ENCODE measurements at regions of chr2 and their contacts with region 1.

Region 1: DNA sequence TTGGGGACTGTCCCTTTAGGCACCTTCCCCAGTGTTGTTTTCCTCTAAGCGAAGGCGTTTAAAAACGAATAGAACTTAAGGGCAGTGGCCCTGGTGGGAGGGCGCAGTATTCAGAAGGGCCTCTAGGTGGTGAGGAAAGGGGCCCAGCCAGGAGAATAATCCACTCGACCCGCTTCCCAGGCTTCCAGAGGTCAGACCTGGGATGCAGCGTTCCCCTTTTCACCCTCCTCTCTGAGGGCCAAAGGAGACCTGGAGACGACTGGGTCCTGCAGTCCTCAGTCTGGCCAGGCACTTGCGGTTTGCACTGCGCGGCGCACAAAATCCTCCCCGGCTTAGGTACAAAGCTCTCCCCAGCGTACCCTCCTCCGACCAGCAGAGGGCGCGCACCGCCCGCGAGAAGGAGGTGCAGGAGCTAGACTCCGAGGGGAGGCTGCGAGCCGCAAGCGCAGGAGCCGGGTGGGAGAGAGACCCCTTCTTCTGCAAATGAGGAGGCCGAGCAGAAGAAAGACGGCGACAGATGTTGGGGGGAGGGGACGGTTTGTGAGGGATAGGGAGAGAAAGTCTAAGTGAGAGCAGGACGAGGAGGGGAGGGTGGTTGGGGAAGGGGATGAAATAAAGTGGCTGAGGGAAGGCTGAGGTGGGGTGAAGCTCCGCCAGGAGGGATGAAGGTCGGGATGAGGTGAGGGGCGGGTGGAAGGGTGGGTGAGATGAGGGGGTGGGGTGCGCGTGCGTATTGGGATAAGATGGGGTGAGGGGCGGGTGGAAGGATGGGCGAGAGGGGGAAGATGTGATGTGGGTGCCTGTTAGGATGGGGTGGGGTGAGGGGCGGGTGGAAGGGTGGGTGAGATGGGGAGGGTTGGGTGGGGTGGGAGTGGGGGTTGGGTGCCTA is 4.9 kb downstream of the FEV start:
- DNase-seq: peak; percentile 81
- H3K4me3 ChIP-seq: no peak overlapping the region
- H3K27ac ChIP-seq: no peak overlapping the region
- H3K4me1 ChIP-seq: peaks cover 15% of the 10 kb centered on the region
- H3K27me3 ChIP-seq: peaks cover 41 to 53% of the 10 kb centered on the region in 2 experiments
- CTCF ChIP-seq: peak; percentile 91 to 98
- POLR2A ChIP-seq: no peak

Region 2: DNA sequence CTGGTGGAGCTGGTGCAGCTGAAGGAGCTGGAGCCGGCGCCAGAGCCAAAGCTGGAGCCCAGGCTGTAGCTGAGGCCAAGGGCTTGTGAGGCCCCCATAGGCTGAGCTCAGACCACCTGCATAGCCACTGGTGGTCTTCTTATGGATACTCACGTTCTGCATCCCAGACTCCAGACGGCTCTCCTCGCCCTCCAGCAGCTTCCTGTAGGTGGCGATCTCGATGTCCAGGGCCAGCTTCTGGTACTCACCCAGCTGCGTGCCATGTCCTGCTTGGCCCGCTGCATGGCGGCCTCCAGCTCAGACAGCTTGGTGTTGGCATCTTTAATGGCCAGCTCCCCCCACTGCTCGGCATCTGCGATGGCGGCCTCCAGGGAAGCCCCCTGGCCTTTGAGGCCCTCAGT is 26.6 kb before region 1 on chr2:
- CTCF ChIA-PET with region 1: interaction called, 12 read pairs
- POLR2A ChIA-PET with region 1: no interaction called
- dilution Hi-C with region 1: no loop called
- intact Hi-C with region 1: no loop called
- DNase-seq: no peak
- H3K4me3 ChIP-seq: no peak overlapping the region
- H3K27ac ChIP-seq: no peak overlapping the region
- H3K4me1 ChIP-seq: no peaks in the 10 kb centered on the region
- H3K27me3 ChIP-seq: peaks cover 23 to 27% of the 10 kb centered on the region in 2 experiments
- CTCF ChIP-seq: peak in 1 of 2 donors; percentile 13
- POLR2A ChIP-seq: no peak

Region 3: DNA sequence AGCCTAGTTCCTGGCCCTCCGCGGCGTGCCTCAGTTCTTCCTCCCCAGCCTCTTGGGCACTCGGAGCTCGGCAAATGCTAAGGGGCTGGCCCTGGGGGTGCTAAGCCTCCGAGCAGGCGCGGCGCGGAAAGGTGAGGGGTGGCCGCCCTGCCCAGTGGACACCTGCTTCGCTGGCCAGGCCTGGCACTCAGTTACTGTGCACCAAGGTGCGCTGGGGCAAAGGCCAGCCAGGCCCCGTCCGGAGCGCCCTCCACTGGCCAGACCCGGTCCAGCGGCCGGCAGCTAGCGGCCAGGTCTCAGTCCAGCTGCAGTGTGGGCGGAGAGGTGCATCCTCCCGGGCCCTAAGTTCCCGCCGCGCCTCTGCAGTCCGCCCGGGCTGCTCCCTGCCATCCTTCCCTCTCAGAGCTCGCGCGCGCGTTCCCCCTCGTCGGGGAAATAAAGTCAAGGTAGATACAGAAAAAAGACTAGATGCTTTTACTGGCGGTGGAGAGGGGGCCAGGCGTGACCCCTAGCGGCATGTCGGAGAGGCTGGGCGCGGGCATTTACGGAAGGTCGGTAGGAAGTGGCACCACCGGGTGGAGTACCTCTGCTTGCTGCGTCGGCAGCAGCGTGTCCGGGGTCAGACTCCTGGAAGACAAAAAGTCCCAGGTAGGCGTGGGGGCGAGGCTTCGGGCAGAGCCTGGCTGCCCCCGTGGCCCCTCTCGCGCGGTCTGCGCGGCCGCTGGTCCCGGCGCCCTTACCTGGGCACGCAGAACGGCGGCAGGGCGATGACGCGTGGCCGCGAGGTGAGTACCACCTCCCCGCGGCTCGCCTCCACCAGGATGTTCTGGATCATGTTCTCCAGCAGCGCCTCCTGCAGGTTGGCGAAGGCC is 22.5 kb after region 1 on chr2:
- CTCF ChIA-PET with region 1: interaction called, 164 read pairs
- POLR2A ChIA-PET with region 1: no interaction called
- dilution Hi-C with region 1: no loop called
- intact Hi-C with region 1: loop called (anchors 1 kb)
- DNase-seq: no peak
- H3K4me3 ChIP-seq: no peak overlapping the region
- H3K27ac ChIP-seq: no peak overlapping the region
- H3K4me1 ChIP-seq: no peaks in the 10 kb centered on the region
- H3K27me3 ChIP-seq: peaks cover 56% of the 10 kb centered on the region in 2 experiments
- CTCF ChIP-seq: peak; percentile 48 to 63
- POLR2A ChIP-seq: no peak

Region 4: GRCh38 chr2:219029829-219030165 is 49.7 kb after region 1 on chr2:
- CTCF ChIA-PET with region 1: interaction called, 64 read pairs
- POLR2A ChIA-PET with region 1: no interaction called
- dilution Hi-C with region 1: no loop called
- intact Hi-C with region 1: loop called (anchors 2 kb)
- DNase-seq: peak; percentile 64
- H3K4me3 ChIP-seq: no peak overlapping the region
- H3K27ac ChIP-seq: no peak overlapping the region
- H3K4me1 ChIP-seq: no peaks in the 10 kb centered on the region
- H3K27me3 ChIP-seq: peaks cover 13 to 14% of the 10 kb centered on the region in 2 experiments
- CTCF ChIP-seq: peak; percentile 85 to 97
- POLR2A ChIP-seq: no peak

Region 5: GRCh38 chr2:219073413-219074129 is 93.5 kb after region 1 on chr2:
- CTCF ChIA-PET with region 1: interaction called, 15 read pairs
- POLR2A ChIA-PET with region 1: no interaction called
- dilution Hi-C with region 1: no loop called
- intact Hi-C with region 1: no loop called
- DNase-seq: peak; percentile 23
- H3K4me3 ChIP-seq: no peak overlapping the region
- H3K27ac ChIP-seq: no peak overlapping the region
- H3K4me1 ChIP-seq: no peaks in the 10 kb centered on the region
- H3K27me3 ChIP-seq: no peaks in the 10 kb centered on the region
- CTCF ChIP-seq: peak; percentile 60 to 65
- POLR2A ChIP-seq: no peak

Region 6: GRCh38 chr2:219155054-219155644 is 175.1 kb after region 1 on chr2:
- CTCF ChIA-PET with region 1: interaction called, 83 read pairs
- POLR2A ChIA-PET with region 1: no interaction called
- dilution Hi-C with region 1: no loop called
- intact Hi-C with region 1: loop called (anchors 1 kb)
- DNase-seq: peak; percentile 61
- H3K4me3 ChIP-seq: no peak overlapping the region
- H3K27ac ChIP-seq: no peak overlapping the region
- H3K4me1 ChIP-seq: peaks cover 6% of the 10 kb centered on the region
- H3K27me3 ChIP-seq: no peaks in the 10 kb centered on the region
- CTCF ChIP-seq: peak; percentile 28 to 36
- POLR2A ChIP-seq: no peak

Region 7: DNA sequence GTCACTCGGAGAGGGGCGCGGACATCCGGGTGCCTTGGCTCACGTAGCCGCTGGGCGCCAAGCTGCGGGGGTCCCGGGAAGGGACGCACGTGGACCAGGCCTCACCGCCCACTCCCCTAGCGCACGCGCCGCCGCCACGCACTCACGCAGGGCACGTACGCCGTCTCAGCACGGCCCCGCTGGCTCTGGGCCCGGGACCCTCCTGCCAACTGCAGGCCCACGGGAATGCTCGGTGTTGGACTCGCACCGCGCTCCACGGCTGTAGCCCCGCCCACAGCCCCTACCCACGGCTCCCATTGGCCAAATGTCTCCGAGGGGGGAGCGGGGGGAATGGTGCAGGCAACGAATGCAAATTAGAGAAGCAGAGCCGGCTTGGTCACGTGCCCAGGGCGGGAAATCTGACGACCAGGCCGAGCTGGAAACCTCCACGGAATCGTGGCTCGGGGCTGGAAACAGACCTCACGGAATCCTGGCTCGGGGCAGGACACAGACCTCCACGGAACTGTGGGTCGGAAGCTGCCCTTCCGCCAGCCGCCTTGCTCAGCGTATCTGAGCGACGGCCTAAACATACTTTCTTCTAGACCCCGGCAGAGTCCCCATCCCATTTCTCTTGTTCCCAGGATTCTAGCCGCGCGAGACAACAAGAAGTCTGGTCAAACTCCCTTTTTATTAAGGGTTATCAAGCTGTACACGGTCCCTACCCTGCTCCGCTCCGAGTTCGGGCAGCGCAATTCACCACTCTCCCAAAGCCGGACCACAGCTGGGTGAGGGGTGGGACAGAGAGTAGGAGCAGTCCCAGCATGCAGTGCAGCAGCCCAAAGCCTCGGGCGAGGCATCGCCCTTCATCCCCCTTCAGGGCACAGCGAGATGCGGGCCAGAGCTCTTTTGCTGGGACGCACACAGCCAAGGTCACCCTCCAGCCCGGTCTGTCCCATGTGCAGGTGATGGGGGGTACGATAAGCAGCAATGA is 238.9 kb after region 1 on chr2 and contains the start of gene ABCB6:
- CTCF ChIA-PET with region 1: no interaction called
- POLR2A ChIA-PET with region 1: no interaction called
- dilution Hi-C with region 1: no loop called
- intact Hi-C with region 1: no loop called
- DNase-seq: peak; percentile 93
- H3K4me3 ChIP-seq: peak within 1 kb of the TSS; percentile 20 to 55 (median 46)
- H3K27ac ChIP-seq: peak within 1 kb of the TSS; percentile 82
- H3K4me1 ChIP-seq: peaks cover 14% of the 10 kb centered on the region
- H3K27me3 ChIP-seq: no peaks in the 10 kb centered on the region
- CTCF ChIP-seq: no peak
- POLR2A ChIP-seq: peak; percentile 83
- total RNA-seq, gene ABCB6: 26.6 and 32.5 TPM in 2 replicates

Region 8: GRCh38 chr2:219261024-219261855 is 281.1 kb after region 1 on chr2:
- CTCF ChIA-PET with region 1: no interaction called
- POLR2A ChIA-PET with region 1: no interaction called
- dilution Hi-C with region 1: no loop called
- intact Hi-C with region 1: no loop called
- DNase-seq: no peak
- H3K4me3 ChIP-seq: no peak overlapping the region
- H3K27ac ChIP-seq: no peak overlapping the region
- H3K4me1 ChIP-seq: no peaks in the 10 kb centered on the region
- H3K27me3 ChIP-seq: peaks cover 18 to 19% of the 10 kb centered on the region in 2 experiments
- CTCF ChIP-seq: no peak
- POLR2A ChIP-seq: no peak